Activated B cell treated with CpG ODN at 0.5 μM for 24 hours (primary cell): ENCODE measurements at regions of chr13 and their contacts with region 1.

Region 1: DNA sequence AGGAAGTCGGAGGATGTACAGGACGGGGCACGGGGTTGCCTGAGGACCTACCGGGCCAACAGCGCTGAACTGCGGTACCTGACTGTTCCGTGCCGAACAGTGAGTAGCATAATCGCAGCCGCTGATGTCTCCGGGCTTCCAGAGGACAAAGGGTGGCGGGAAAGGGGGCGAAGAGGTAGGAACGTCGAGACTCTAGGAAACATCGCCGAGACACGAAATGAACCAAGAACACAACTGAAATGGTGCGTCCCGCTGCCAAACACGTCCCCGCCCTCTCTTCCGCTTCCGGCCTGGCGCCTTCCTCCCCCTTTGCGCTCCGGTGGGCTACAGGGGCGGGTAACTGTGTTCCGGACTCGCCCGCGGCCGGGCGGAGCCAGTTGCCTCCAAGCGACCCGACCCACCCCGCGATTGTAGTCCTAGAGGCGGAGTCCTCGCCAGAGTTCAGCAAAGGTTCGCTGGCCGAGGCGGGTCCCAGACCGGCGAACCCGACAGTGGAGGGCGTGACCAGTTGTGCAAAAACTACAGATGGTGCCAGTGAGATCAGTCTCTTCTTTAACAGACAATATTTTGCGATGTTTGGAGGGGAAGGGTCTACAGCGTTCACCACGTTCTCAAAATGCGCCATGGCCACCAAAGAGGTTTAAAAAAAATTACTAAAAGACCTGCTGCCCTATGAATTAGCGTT is at the start of gene MRPS31:
- DNase-seq: peak; percentile 94
- ATAC-seq: peak; percentile 100
- H3K4me3 Mint-ChIP-seq: peak within 1 kb of the TSS; percentile 98
- H3K27ac Mint-ChIP-seq: peak within 1 kb of the TSS; percentile 94
- H3K4me1 Mint-ChIP-seq: peaks cover 30% of the 10 kb centered on the region
- H3K27me3 Mint-ChIP-seq: no peaks in the 10 kb centered on the region
- CTCF ChIP-seq: no peak
- total RNA-seq, gene MRPS31: 29.4 and 30.5 TPM in 2 replicates

Region 2: GRCh38 chr13:39777527-39778061 is 993.5 kb before region 1 on chr13:
- CTCF ChIA-PET with region 1: no interaction called
- POLR2A ChIA-PET with region 1: no interaction called
- intact Hi-C with region 1: loop called (anchors 10 kb)
- DNase-seq: no peak
- ATAC-seq: peak; percentile 47
- H3K4me3 Mint-ChIP-seq: no peak overlapping the region
- H3K27ac Mint-ChIP-seq: no peak overlapping the region
- H3K4me1 Mint-ChIP-seq: peaks cover 8% of the 10 kb centered on the region
- H3K27me3 Mint-ChIP-seq: no peaks in the 10 kb centered on the region
- CTCF ChIP-seq: no peak

Region 3: DNA sequence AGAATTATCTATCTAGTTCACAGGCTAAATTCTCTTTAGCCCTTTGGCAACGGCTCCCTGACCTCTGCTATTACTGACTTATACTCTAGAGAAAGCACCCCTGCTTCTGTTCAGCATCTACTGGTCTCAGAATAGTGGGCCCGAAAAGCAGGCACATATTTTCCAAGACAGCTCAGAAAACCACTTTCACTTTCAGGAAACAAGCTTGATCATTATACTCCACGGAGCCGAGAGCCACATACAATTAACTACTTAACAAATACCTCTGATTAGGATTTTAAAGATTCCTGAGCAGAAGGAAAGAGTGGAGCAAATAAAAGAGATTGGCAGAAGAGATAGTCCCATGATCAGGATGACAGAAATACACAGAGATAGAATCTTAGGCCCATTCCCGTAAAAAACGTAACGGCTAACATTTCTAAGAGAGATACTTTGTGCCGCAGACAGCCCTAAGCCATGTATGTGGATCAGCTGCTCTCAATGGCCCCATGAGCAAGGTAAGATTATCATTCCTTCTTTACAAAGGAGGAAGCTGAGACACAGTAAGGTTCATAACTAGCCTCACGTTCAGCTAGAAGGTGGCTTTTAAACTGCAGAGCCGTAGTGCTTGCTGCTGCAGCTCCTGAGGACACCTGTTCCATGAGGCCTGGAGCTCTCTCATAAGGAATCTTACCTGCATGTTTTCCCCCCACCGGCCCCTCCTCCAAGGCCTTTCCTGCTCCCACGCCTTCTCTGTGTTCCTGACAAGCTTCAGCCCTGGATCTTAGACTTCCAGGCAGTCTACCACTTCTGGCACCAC is 331.9 kb before region 1 on chr13:
- CTCF ChIA-PET with region 1: no interaction called
- POLR2A ChIA-PET with region 1: no interaction called
- intact Hi-C with region 1: loop called (anchors 10 kb)
- DNase-seq: no peak
- ATAC-seq: peak; percentile 78
- H3K4me3 Mint-ChIP-seq: peak overlapping the region; percentile 39
- H3K27ac Mint-ChIP-seq: peak overlapping the region; percentile 81
- H3K4me1 Mint-ChIP-seq: peaks cover 83% of the 10 kb centered on the region
- H3K27me3 Mint-ChIP-seq: no peaks in the 10 kb centered on the region
- CTCF ChIP-seq: no peak

Region 4: GRCh38 chr13:41193919-41194824 is 423.1 kb after region 1 on chr13 and contains the start of gene KBTBD7:
- CTCF ChIA-PET with region 1: no interaction called
- POLR2A ChIA-PET with region 1: no interaction called
- intact Hi-C with region 1: loop called (anchors 10 kb)
- DNase-seq: peak; percentile 85
- ATAC-seq: peak; percentile 92
- H3K4me3 Mint-ChIP-seq: peak within 1 kb of the TSS; percentile 93
- H3K27ac Mint-ChIP-seq: peak within 1 kb of the TSS; percentile 94
- H3K4me1 Mint-ChIP-seq: peaks cover 54% of the 10 kb centered on the region
- H3K27me3 Mint-ChIP-seq: no peaks in the 10 kb centered on the region
- CTCF ChIP-seq: no peak
- total RNA-seq, gene KBTBD7: 5.2 and 6.4 TPM in 2 replicates

Region 5: GRCh38 chr13:41384755-41385503 is 613.9 kb after region 1 on chr13:
- CTCF ChIA-PET with region 1: no interaction called
- POLR2A ChIA-PET with region 1: no interaction called
- intact Hi-C with region 1: no loop called
- DNase-seq: no peak
- ATAC-seq: no peak
- H3K4me3 Mint-ChIP-seq: no peak overlapping the region
- H3K27ac Mint-ChIP-seq: no peak overlapping the region
- H3K4me1 Mint-ChIP-seq: no peaks in the 10 kb centered on the region
- H3K27me3 Mint-ChIP-seq: peaks cover 8% of the 10 kb centered on the region
- CTCF ChIP-seq: no peak